ENCODE measurements at regions of chr19 and their contacts with region 1.

Region 1: GRCh38 chr19:47210689-47211316 is 20.2 kb downstream of the BBC3 start:
- DNase-seq: peak in 1 of 2 donors; percentile 83
- ATAC-seq: peak; percentile 86
- H3K4me3 ChIP-seq: no peak overlapping the region
- H3K27ac ChIP-seq: no peak overlapping the region
- H3K4me1 ChIP-seq: no peaks in the 10 kb centered on the region
- H3K27me3 ChIP-seq: no peaks in the 10 kb centered on the region

Region 2: DNA sequence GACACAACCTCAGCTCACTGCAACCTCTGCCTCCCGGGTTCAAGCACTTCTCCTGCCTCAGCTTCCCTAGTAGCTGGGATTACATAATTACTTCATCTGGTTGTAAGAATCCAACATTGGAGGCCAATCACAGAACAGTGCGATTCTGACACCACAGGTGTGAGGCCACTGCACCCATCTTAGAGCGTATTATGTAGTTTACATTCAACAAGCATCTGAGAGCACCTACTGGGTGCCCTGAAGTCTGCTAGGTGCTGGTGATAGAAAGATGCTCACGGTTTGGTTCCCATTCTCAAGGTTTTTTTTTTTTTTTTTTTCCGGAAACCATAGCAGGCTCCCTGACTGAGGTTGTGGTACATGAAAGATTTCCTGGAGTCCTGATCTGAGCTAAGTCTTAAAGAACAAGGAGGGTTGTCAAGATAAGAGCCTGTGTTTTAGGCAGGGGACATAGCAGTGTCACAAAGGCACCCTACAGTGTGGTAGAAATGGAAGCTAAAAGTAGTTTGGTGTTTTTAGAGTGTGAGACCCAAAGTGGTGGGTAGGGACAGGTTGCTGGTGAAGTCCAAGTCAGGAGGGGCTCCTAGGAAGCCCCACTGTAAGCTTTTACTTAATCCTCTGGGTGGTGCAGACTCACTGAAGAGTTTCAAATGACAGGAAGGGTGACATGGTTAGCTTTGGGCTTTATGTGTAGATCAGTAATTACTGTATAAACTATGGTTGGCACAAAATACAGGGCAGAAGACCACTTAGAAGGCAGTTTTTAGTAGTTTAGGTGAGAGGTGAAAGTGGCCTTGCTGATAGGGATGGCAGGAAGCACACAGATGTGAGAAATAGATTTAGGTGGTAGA is 64.9 kb before region 1 on chr19:
- intact Hi-C with region 1: loop called in 1 of 2 experiments (anchors 5 kb)
- DNase-seq: no peak
- ATAC-seq: no peak
- H3K4me3 ChIP-seq: no peak overlapping the region
- H3K27ac ChIP-seq: no peak overlapping the region
- H3K4me1 ChIP-seq: no peaks in the 10 kb centered on the region
- H3K27me3 ChIP-seq: no peaks in the 10 kb centered on the region

Region 3: DNA sequence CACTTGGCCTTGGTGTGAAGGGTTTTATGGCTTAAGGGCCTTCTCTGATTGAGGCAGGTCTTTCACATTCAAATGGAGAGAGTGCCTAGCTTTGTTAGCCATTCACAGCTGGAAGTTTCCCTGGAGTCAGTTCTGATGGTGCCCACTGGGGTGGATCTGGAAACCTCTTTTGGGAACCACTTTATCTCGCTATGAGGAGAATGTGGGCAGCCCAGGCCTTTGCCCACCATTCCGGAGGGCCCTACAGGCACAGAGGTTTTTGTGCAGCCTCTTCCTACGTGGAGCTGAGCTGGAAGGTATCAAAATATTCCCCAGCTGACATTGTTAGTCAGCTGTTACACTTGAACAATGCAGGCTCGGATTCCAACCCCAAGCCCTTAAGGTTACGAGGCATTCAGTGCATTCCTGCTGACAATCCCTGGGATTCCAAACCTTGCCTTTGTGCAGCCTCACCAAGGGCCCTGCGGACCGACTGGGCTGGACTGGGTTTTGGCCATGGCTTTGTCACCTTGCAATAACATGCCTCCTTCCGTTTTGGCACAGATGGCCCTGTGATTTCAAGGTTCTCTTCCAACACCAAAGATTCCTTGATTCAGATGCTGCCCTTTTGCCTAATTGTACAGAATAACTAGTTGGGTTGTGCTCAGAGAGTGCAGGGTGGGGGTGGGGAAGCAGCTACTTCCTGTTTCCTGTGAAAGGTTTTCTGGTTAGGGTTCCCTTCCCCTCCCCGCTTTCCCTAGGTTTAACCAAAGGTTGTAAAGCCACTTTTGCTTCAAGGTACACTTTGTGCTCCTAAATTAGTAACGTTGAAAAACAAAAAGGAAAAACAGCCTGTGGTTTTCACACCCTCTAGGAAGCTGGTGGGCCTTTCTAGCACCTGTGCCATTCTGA is 53.1 kb before region 1 on chr19:
- intact Hi-C with region 1: loop called in 1 of 2 experiments (anchors 5 kb)
- DNase-seq: no peak
- ATAC-seq: peak; percentile 56
- H3K4me3 ChIP-seq: no peak overlapping the region
- H3K27ac ChIP-seq: peak overlapping the region; percentile 71 to 90
- H3K4me1 ChIP-seq: peaks cover 0 to 3% of the 10 kb centered on the region in 2 donors
- H3K27me3 ChIP-seq: no peaks in the 10 kb centered on the region

Measured in aorta (tissue), 5 donors.